Right cardiac atrium (tissue), 5 donors: ENCODE measurements at regions of chr11 and their contacts with region 1.

Region 1: GRCh38 chr11:129117595-129118350 is 74.4 kb downstream of the ARHGAP32 start:
- DNase-seq: no peak
- ATAC-seq: peak in 1 of 2 donors; percentile 61
- H3K4me3 ChIP-seq: no peak overlapping the region
- H3K27ac ChIP-seq: no peak overlapping the region
- H3K4me1 ChIP-seq: no peaks in the 10 kb centered on the region
- H3K27me3 ChIP-seq: no peaks in the 10 kb centered on the region

Region 2: DNA sequence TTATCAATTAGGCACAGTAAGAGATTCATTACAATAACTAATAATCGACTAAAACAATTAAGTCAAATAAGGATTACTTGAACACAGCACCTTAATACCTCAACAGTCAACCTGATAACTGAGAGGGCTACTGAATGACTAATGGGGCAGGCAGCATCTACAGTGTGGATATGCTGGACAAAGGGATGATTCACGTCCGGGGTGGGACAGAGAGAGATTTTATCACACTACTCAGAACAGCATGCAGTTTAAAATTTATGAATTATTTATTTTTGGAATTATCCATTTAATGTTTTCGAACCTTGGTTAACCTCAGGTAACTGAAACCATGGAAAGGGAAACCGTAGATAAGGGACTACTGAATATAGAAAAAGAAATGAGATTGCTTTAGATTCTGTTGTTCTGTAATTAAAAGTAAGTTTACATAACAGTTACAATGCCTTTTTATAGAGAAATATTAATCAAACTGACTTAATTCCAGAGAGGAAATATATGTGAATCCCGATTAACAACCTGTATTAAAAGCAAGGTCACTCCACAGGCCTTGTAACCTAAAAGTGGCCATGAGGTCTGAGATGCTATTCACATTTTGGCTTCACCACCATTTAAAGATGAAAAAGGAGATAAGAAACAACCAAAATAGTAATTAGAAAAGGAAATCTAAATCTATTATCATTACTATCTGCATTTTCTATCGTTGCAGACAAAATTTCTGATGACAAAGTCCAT is 56.1 kb before region 1 on chr11:
- intact Hi-C with region 1: no loop called
- DNase-seq: no peak
- ATAC-seq: no peak
- H3K4me3 ChIP-seq: no peak overlapping the region
- H3K27ac ChIP-seq: no peak overlapping the region
- H3K4me1 ChIP-seq: no peaks in the 10 kb centered on the region
- H3K27me3 ChIP-seq: no peaks in the 10 kb centered on the region

Region 3: DNA sequence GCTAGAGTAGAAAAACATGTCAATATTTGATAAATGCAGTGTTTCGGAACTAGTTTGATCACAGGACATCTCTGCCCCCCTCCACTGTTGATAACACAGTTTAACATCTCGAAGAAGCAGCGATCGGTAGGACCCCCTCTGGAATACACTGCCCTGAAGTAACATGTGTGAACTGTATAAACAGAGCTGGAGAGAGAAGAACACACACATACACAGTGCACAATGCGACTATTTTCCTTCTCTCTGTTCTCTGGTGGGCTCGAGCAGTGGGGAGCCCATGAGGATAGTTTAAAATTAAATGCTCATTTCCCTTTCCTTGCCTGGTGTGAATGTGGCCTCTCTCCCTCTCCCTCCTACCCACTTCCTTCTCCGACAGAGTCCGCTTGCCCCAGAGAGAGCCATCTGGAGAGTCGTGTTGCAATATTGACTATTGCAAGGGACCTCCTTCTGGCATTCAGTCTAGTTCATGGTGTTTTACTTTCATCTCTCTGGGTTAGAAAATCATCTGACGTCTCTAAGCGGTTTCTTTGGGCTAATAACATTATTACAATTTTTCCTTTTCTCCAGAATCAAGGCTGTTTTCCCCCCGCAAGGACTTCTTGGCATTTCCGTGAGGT is 206.2 kb after region 1 on chr11:
- intact Hi-C with region 1: loop called in 1 of 4 experiments (anchors 5 kb)
- DNase-seq: peak in 2 of 3 donors; percentile 42 to 43
- ATAC-seq: peak; percentile 90 to 93
- H3K4me3 ChIP-seq: no peak overlapping the region
- H3K27ac ChIP-seq: peak overlapping the region; percentile 51
- H3K4me1 ChIP-seq: peaks cover 7% of the 10 kb centered on the region
- H3K27me3 ChIP-seq: no peaks in the 10 kb centered on the region

Region 4: GRCh38 chr11:129331871-129332274 is 214.1 kb after region 1 on chr11:
- intact Hi-C with region 1: loop called (anchors 2 to 5 kb)
- DNase-seq: peak; percentile 81 to 93 (median 90)
- ATAC-seq: peak; percentile 94 to 95
- H3K4me3 ChIP-seq: no peak overlapping the region
- H3K27ac ChIP-seq: no peak overlapping the region
- H3K4me1 ChIP-seq: no peaks in the 10 kb centered on the region
- H3K27me3 ChIP-seq: no peaks in the 10 kb centered on the region